MCF 10A (cell line): ENCODE measurements at regions of chr3 and their contacts with region 1.

Region 1: DNA sequence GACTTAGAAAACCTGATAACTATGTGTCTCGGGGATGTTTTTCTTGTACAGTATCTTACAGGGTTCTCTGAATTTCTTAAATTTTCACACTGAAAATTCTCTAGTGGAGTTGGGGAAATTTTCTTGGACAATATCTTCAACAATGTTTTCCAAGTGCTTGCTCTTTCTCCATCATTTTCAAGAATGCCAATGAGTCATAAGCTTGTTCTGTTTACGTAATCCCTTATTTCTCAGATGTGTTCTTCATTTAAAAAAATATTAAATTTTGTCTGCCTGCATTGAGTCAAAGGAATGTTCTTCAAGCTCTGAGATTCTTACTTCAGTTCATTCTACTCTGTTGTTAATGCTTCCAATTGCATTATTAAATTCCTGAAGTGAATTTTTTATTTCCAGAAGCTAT is 21.9 kb upstream of the PLSCR2 start:
- DNase-seq: peak; percentile 68
- H3K4me3 Mint-ChIP-seq: no peak overlapping the region
- H3K27ac Mint-ChIP-seq: peak overlapping the region; percentile 91
- H3K4me1 Mint-ChIP-seq: peaks cover 41% of the 10 kb centered on the region
- H3K27me3 Mint-ChIP-seq: no peaks in the 10 kb centered on the region
- CTCF ChIP-seq: no peak

Region 2: GRCh38 chr3:146503461-146504202 is 12.3 kb after region 1 on chr3:
- CTCF ChIA-PET with region 1: no interaction called
- POLR2A ChIA-PET with region 1: interaction called, 5 read pairs
- intact Hi-C with region 1: loop called (anchors 1 kb)
- DNase-seq: peak; percentile 86
- H3K4me3 Mint-ChIP-seq: peak overlapping the region; percentile 2
- H3K27ac Mint-ChIP-seq: peak overlapping the region; percentile 59
- H3K4me1 Mint-ChIP-seq: peaks cover 43% of the 10 kb centered on the region
- H3K27me3 Mint-ChIP-seq: no peaks in the 10 kb centered on the region
- CTCF ChIP-seq: peak; percentile 24

Region 3: GRCh38 chr3:146544002-146544928 is 53.0 kb after region 1 on chr3 and contains the start of gene PLSCR1:
- CTCF ChIA-PET with region 1: interaction called, 4 read pairs
- POLR2A ChIA-PET with region 1: interaction called, 24 read pairs
- intact Hi-C with region 1: no loop called
- DNase-seq: peak; percentile 99
- H3K4me3 Mint-ChIP-seq: peak within 1 kb of the TSS; percentile 79
- H3K27ac Mint-ChIP-seq: peak within 1 kb of the TSS; percentile 96
- H3K4me1 Mint-ChIP-seq: peaks cover 28% of the 10 kb centered on the region
- H3K27me3 Mint-ChIP-seq: no peaks in the 10 kb centered on the region
- CTCF ChIP-seq: no peak
- total RNA-seq, gene PLSCR1: 62.8 and 79.2 TPM in 2 replicates

Region 4: DNA sequence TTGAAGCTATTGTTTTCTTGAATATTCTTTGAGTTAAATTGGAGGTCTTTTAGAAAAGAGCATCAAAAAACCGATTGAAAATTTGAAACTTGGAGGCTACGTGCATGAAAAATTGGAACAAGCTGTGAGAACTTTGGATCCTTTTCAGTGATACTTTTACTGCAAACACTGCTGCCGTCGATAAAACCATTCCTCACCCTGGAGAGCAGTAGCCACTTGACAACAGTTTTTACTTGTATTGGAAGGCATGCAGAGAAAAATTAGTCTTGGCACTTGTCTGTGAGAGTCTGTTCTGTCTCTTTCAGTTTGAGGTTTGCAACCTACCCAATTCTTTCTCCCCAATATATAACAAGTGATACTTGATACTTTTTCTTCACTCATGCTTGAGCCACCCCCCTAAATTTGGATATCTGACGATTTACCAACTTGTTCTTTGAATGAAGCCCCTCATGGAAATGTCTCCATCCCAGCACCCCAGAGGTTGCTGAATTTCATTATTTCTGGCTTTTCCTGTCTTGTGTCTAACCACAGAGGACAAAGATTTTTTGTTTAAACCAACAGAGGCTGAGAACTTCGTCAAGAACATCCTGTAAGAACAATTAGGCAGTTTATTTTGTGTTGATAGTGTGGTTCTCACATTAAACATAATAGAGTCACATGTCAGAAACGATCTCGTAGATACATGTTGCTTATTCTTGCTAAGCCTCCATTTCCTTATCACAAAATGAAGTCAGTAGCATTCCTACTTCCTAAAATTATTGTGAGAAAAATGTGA is 421.1 kb after region 1 on chr3:
- CTCF ChIA-PET with region 1: no interaction called
- POLR2A ChIA-PET with region 1: no interaction called
- intact Hi-C with region 1: no loop called
- DNase-seq: no peak
- H3K4me3 Mint-ChIP-seq: no peak overlapping the region
- H3K27ac Mint-ChIP-seq: no peak overlapping the region
- H3K4me1 Mint-ChIP-seq: no peaks in the 10 kb centered on the region
- H3K27me3 Mint-ChIP-seq: peaks cover 71% of the 10 kb centered on the region
- CTCF ChIP-seq: no peak

Region 5: DNA sequence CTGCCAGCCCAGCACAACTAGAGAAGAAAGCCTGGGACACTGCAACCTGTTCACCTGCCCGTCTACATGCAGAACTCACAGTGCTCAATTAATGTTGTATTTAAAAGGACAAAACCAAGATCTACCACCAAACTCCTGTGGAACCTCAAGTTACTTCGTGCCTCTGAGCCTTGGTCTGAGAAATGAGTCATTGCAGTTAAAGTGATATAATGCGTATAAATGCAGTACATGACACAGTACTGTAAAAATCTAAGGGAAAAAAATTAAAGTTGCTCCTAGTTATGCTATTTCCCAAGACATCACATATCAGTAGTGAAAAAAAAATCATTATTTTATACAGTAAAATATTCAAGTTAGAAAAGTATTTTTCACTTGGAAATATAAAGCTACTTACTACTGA is 776.1 kb after region 1 on chr3:
- CTCF ChIA-PET with region 1: no interaction called
- POLR2A ChIA-PET with region 1: no interaction called
- intact Hi-C with region 1: no loop called
- DNase-seq: no peak
- H3K4me3 Mint-ChIP-seq: no peak overlapping the region
- H3K27ac Mint-ChIP-seq: no peak overlapping the region
- H3K4me1 Mint-ChIP-seq: no peaks in the 10 kb centered on the region
- H3K27me3 Mint-ChIP-seq: peaks cover 27% of the 10 kb centered on the region
- CTCF ChIP-seq: no peak